Caco-2 (cell line): ENCODE measurements at regions of chr6 and their contacts with region 1.

Region 1: GRCh38 chr6:33425668-33426577 is 6.1 kb downstream of the SYNGAP1 start:
- DNase-seq: peak; percentile 91 to 93
- H3K4me3 ChIP-seq: peak overlapping the region; percentile 71
- H3K4me3 Mint-ChIP-seq: peak overlapping the region; percentile 81
- H3K27ac Mint-ChIP-seq: peak overlapping the region; percentile 75
- H3K4me1 ChIP-seq: peaks cover 39% of the 10 kb centered on the region
- H3K4me1 Mint-ChIP-seq: peaks cover 23% of the 10 kb centered on the region
- H3K27me3 ChIP-seq: no peaks in the 10 kb centered on the region
- H3K27me3 Mint-ChIP-seq: peaks cover 7% of the 10 kb centered on the region
- CTCF ChIP-seq: peak; percentile 74 to 82

Region 2: GRCh38 chr6:33397541-33397940 is 28.4 kb before region 1 on chr6:
- CTCF ChIA-PET with region 1: no interaction called
- POLR2A ChIA-PET with region 1: no interaction called
- intact Hi-C with region 1: no loop called
- DNase-seq: no peak
- H3K4me3 ChIP-seq: no peak overlapping the region
- H3K4me3 Mint-ChIP-seq: no peak overlapping the region
- H3K27ac Mint-ChIP-seq: no peak overlapping the region
- H3K4me1 ChIP-seq: 0 out of 2 replicates have a peak, but pooled peaks cover 5% of the 10 kb centered on the region
- H3K4me1 Mint-ChIP-seq: peaks cover 27% of the 10 kb centered on the region
- H3K27me3 ChIP-seq: no peaks in the 10 kb centered on the region
- H3K27me3 Mint-ChIP-seq: no peaks in the 10 kb centered on the region
- CTCF ChIP-seq: no peak

Region 3: DNA sequence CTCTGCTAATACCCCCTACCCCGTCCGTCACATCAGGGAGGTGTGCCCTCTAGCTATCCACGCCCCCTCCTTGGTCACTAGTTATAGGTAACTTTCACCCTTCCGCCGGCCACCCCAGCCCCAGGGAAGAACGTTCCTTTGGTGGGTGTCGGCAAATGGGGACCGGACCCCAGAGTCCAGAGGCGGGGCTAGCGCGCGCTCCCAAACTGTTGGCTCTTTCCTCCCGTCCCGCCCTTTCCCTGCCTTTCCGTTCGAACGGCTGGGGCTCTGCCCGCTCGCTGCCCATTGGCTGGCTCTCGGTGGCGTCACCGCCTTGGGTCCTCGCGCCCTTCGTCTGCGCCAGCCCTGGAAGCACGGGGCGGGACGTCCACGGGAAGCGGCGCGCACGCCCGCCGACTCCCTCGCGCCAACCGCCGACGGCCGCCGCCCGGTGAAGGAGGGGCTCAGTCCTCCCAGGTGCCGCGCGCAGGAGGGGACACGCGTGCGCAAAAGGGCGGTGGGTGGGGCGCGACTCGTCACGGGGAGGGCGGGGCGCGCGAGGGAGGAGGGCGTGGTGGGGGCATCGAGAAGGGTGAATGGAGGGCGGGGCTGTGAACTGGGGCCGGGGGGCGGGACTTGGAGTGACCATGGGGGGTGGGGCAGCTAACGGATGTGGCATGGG is 15.7 kb before region 1 on chr6:
- CTCF ChIA-PET with region 1: interaction called, 16 read pairs
- POLR2A ChIA-PET with region 1: interaction called, 8 read pairs
- intact Hi-C with region 1: loop called (anchors 1 kb)
- DNase-seq: peak; percentile 98 to 99
- H3K4me3 ChIP-seq: peak overlapping the region; percentile 86
- H3K4me3 Mint-ChIP-seq: peak overlapping the region; percentile 96
- H3K27ac Mint-ChIP-seq: peak overlapping the region; percentile 99
- H3K4me1 ChIP-seq: peaks cover 15% of the 10 kb centered on the region
- H3K4me1 Mint-ChIP-seq: peaks cover 13% of the 10 kb centered on the region
- H3K27me3 ChIP-seq: no peaks in the 10 kb centered on the region
- H3K27me3 Mint-ChIP-seq: no peaks in the 10 kb centered on the region
- CTCF ChIP-seq: no peak

Region 4: GRCh38 chr6:33454009-33454946 is 28.4 kb after region 1 on chr6 and contains the start of gene ZBTB9:
- CTCF ChIA-PET with region 1: interaction called, 3 read pairs
- POLR2A ChIA-PET with region 1: interaction called, 7 read pairs
- intact Hi-C with region 1: loop called (anchors 2 kb)
- DNase-seq: peak; percentile 96 to 97
- H3K4me3 ChIP-seq: peak within 1 kb of the TSS; percentile 79
- H3K4me3 Mint-ChIP-seq: peak within 1 kb of the TSS; percentile 97
- H3K27ac Mint-ChIP-seq: peak within 1 kb of the TSS; percentile 80
- H3K4me1 ChIP-seq: no peaks in the 10 kb centered on the region
- H3K4me1 Mint-ChIP-seq: peaks cover 19% of the 10 kb centered on the region
- H3K27me3 ChIP-seq: no peaks in the 10 kb centered on the region
- H3K27me3 Mint-ChIP-seq: no peaks in the 10 kb centered on the region
- CTCF ChIP-seq: no peak
- total RNA-seq, gene ZBTB9: 11.4 and 12.5 TPM in 2 replicates